SK-N-SH (cell line): ENCODE measurements at regions of chr1 and their contacts with region 1.

Region 1: DNA sequence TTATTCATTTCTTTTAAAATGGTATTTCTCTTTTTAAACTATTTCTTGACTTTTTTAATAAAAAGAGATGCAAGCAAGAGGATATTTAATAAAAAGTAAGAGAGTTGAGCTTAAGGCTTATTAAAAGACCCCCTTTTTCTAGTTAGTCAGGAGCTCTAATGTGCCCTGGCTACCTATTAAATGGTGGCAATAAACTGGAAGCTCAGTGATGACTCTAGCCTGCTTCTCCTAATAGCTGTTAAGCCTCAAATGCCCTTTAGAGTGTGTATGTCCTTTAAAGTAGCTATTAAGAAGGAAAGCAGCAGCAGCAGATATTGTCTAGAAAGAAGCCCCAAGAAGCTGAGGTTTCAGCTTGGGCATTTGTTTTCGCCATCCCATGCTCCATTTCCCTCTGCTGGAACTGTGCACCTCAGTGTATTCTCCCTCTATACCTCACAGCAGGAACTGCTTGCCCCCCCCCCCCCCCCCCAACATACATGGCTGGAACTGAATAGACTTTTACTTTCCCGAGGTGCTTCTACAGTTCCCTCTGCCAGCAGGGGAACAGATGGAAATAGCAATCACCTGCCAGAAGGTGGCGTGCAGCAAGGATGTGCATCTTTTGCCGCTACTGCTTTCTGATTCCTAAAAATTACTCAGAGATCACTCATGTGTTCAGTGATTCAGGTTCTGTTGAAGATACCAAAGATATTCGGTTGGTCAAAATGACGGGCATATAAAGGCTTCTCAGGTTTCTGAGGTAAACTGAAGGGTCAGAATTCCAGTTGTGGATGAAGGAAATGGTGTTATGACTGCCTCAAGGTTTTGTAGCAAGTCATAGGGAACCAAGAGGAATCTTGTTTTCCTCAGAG is 2.5 kb downstream of the RGS4 start:
- DNase-seq: peak; percentile 44
- H3K4me3 ChIP-seq: peak overlapping the region; percentile 69 to 82
- H3K27ac ChIP-seq: peak overlapping the region; percentile 91 to 99
- H3K4me1 ChIP-seq: peaks cover 36 to 37% of the 10 kb centered on the region in 2 experiments; a peak in 3 of 4 replicates
- H3K27me3 ChIP-seq: no peaks in the 10 kb centered on the region
- CTCF ChIP-seq: peak; percentile 74
- EP300 ChIP-seq: peak in 1 of 2 experiments; percentile 36; a peak in 1 of 4 replicates
- RAD21 ChIP-seq: peak; percentile 74

Region 2: GRCh38 chr1:162878000-162878596 is 193.5 kb before region 1 on chr1:
- CTCF ChIA-PET with region 1: interaction called, 120 read pairs
- POLR2A ChIA-PET with region 1: interaction called, 450 read pairs
- DNase-seq: peak; percentile 33
- H3K4me3 ChIP-seq: no peak overlapping the region; a peak in 1 of 4 replicates
- H3K27ac ChIP-seq: peak overlapping the region; percentile 60 to 87
- H3K4me1 ChIP-seq: peaks cover 19 to 24% of the 10 kb centered on the region in 2 experiments
- H3K27me3 ChIP-seq: no peaks in the 10 kb centered on the region
- CTCF ChIP-seq: peak; percentile 91
- EP300 ChIP-seq: no peak
- RAD21 ChIP-seq: peak; percentile 100

Region 3: GRCh38 chr1:162916407-162916806 is 155.2 kb before region 1 on chr1:
- CTCF ChIA-PET with region 1: interaction called, 20 read pairs
- POLR2A ChIA-PET with region 1: interaction called, 300 read pairs
- DNase-seq: no peak
- H3K4me3 ChIP-seq: no peak overlapping the region
- H3K27ac ChIP-seq: peak overlapping the region; percentile 53 to 99
- H3K4me1 ChIP-seq: peaks cover 0 to 34% of the 10 kb centered on the region in 2 experiments; a peak in 2 of 4 replicates
- H3K27me3 ChIP-seq: no peaks in the 10 kb centered on the region
- CTCF ChIP-seq: no peak
- EP300 ChIP-seq: no peak
- RAD21 ChIP-seq: no peak

Region 4: DNA sequence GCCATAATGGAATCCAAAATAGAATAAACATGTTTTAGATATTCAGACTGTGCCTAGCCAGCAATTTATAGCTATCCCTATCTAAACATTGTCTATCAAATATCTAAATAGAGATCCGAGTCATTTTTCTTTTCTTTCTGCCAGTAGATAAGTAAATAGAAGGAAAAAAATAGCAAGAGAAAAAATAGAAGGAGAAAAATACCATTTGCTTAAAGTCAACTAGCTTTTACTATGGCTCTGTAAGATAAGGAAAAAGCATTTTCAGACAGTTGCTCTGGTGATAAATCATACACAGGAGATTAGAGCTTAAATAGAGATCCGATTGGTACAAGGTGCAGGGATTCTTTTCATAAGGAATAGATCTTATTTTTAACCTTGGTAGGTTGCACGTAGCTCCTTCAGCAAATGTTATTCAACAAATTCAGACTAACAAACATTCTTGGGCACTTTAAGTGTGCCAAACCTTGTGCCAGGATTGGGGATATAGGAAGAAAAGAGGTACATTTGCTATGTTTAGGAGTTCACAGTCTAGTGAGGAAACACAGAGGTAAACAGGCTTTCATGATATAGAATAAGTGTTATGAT is 140.6 kb before region 1 on chr1:
- CTCF ChIA-PET with region 1: interaction called, 13 read pairs
- POLR2A ChIA-PET with region 1: interaction called, 84 read pairs
- DNase-seq: no peak
- H3K4me3 ChIP-seq: no peak overlapping the region
- H3K27ac ChIP-seq: peak overlapping the region; percentile 9 to 99; a peak in 3 of 4 replicates
- H3K4me1 ChIP-seq: peaks cover 0 to 53% of the 10 kb centered on the region in 2 experiments; a peak in 2 of 4 replicates
- H3K27me3 ChIP-seq: no peaks in the 10 kb centered on the region
- CTCF ChIP-seq: no peak
- EP300 ChIP-seq: peak in 1 of 2 experiments; percentile 34; a peak in 1 of 4 replicates
- RAD21 ChIP-seq: no peak

Region 5: GRCh38 chr1:163048869-163049268 is 22.8 kb before region 1 on chr1:
- CTCF ChIA-PET with region 1: interaction called, 7 read pairs
- POLR2A ChIA-PET with region 1: interaction called, 11 read pairs
- DNase-seq: peak; percentile 19
- H3K4me3 ChIP-seq: no peak overlapping the region
- H3K27ac ChIP-seq: peak overlapping the region in 1 of 2 experiments; percentile 72; a peak in 2 of 4 replicates
- H3K4me1 ChIP-seq: peaks cover 0 to 14% of the 10 kb centered on the region in 2 experiments; a peak in 3 of 4 replicates
- H3K27me3 ChIP-seq: no peaks in the 10 kb centered on the region
- CTCF ChIP-seq: no peak
- EP300 ChIP-seq: peak in 1 of 2 experiments; percentile 48; a peak in 1 of 4 replicates
- RAD21 ChIP-seq: no peak

Region 6: DNA sequence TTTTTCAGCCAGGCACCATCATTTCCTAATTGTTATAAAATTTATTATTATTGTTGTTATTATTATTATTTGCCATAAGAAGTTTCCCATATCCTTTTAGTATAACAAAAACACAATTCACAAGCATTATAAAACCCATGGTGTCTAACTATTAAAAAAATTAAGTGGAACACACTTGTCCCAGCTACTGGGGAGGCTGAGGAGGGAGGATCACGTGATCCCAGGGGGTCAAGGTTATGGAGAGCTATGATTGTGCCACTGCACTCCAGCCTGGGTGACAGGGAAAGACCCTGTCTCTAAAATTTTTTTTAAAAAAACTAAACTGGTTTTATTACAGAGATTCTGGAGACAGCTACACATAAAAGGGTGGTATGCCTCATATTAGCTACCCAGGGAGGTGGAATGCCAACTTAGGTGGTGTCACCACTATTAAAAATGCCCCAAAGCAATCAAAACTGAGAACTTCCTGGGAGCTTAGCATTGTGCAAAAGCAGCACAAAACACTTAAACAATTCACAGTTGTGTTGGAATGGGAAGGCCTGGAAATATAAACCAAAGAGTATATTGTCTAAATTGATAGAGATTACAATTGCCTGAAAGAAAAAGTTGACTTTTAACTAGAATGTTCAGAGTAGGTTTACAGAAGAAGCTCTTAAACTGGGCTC is 11.2 kb before region 1 on chr1:
- CTCF ChIA-PET with region 1: interaction called, 10 read pairs
- POLR2A ChIA-PET with region 1: interaction called, 15 read pairs
- DNase-seq: no peak
- H3K4me3 ChIP-seq: no peak overlapping the region
- H3K27ac ChIP-seq: no peak overlapping the region
- H3K4me1 ChIP-seq: peaks cover 0 to 4% of the 10 kb centered on the region in 2 experiments; a peak in 3 of 4 replicates
- H3K27me3 ChIP-seq: no peaks in the 10 kb centered on the region
- CTCF ChIP-seq: no peak
- EP300 ChIP-seq: no peak
- RAD21 ChIP-seq: no peak

Region 7: GRCh38 chr1:163106364-163106987 is 34.8 kb after region 1 on chr1:
- CTCF ChIA-PET with region 1: no interaction called
- POLR2A ChIA-PET with region 1: no interaction called
- DNase-seq: no peak
- H3K4me3 ChIP-seq: no peak overlapping the region
- H3K27ac ChIP-seq: no peak overlapping the region; a peak in 1 of 4 replicates
- H3K4me1 ChIP-seq: peaks cover 9 to 18% of the 10 kb centered on the region in 2 experiments; a peak in 3 of 4 replicates
- H3K27me3 ChIP-seq: no peaks in the 10 kb centered on the region
- CTCF ChIP-seq: no peak
- EP300 ChIP-seq: no peak
- RAD21 ChIP-seq: no peak

Region 8: DNA sequence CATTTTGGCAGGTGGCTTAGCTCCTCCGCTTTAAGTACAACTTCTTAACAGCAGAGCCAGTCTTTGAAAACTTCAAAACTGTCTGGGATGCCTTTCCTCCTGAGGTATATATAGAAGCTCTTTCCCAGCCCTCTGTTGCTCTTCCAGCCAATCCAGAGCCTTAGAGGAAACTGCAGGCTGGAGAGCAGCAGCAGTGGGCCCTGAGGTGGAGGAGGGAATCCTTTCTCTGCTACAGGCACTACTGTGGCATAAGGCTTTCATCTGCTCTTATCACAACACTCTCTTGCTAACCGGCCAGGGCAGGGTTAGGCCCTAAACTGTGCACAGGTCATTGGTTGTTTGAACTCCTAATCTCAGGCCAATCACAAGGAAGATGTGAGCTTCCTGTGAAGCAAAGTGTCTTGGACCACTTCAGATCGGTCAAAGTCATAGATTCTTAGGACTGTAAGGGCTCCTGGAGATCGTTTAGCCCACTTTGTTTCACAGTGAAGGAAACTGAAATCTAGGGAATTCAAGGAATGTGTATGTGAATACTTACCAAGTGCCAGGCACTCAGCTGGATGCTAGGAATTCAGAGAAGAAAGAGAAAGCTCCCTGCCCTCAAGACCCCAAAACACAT is 131.3 kb after region 1 on chr1 and contains the start of gene RGS5:
- CTCF ChIA-PET with region 1: interaction called, 7 read pairs
- POLR2A ChIA-PET with region 1: interaction called, 19 read pairs
- DNase-seq: peak; percentile 73
- H3K4me3 ChIP-seq: peak within 1 kb of the TSS; percentile 62 to 66
- H3K27ac ChIP-seq: peak within 1 kb of the TSS; percentile 77 to 99
- H3K4me1 ChIP-seq: peaks cover 18 to 25% of the 10 kb centered on the region in 2 experiments; a peak in 3 of 4 replicates
- H3K27me3 ChIP-seq: no peaks in the 10 kb centered on the region
- CTCF ChIP-seq: no peak
- EP300 ChIP-seq: peak in 1 of 2 experiments; percentile 44; a peak in 2 of 4 replicates
- RAD21 ChIP-seq: no peak; the same call in 1 of the 2 replicates
- polyA plus RNA-seq, gene RGS5: 260 and 290 TPM in 2 replicates